Gastrocnemius medialis (tissue), 4 donors: ENCODE measurements at regions of chr5 and their contacts with region 1.

Region 1: DNA sequence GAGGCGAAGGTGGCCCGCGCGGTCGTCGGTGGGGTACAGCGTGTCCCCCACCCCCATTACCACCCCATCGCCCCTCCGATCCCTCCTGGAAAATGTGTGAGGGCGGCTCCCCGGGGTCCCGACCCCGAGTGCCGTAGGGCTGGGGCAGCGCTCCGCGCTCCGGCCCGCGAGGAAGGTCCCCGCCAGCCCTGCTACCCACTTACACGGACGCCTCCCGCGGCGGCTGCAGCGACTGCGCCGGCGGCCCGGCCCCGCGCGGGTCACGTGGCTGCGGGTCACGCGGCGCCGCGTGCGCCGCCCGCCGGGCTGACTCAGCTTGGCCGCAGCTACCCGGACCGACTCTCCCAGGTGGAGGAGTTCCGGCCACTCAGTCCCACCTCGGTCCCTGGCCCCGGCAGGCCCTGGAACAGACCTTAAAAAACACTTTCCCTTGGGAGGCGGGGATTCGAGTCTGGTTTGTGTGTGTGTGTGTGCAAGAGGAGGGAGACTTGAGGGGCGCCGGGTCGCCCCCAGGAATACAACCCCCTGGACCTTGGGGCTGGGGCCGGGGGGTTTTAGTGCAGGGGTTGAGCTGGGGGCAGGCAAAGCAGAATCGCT is at the start of gene GNPDA1:
- DNase-seq: peak; percentile 76 to 85
- ATAC-seq: peak; percentile 84 to 89
- H3K4me3 ChIP-seq: peak within 1 kb of the TSS; percentile 74 to 91 (median 83)
- H3K27ac ChIP-seq: peak within 1 kb of the TSS; percentile 91 to 99 (median 98)
- H3K4me1 ChIP-seq: peaks cover 15 to 19% of the 10 kb centered on the region in 2 donors
- H3K27me3 ChIP-seq: no peaks in the 10 kb centered on the region
- CTCF ChIP-seq: peak in 4 of 5 experiments; percentile 19 to 52 (median 38)
- POLR2A ChIP-seq: peak; percentile 86 to 93
- total RNA-seq, gene GNPDA1: 22.3 to 50.0 (median 47.3) TPM

Region 2: DNA sequence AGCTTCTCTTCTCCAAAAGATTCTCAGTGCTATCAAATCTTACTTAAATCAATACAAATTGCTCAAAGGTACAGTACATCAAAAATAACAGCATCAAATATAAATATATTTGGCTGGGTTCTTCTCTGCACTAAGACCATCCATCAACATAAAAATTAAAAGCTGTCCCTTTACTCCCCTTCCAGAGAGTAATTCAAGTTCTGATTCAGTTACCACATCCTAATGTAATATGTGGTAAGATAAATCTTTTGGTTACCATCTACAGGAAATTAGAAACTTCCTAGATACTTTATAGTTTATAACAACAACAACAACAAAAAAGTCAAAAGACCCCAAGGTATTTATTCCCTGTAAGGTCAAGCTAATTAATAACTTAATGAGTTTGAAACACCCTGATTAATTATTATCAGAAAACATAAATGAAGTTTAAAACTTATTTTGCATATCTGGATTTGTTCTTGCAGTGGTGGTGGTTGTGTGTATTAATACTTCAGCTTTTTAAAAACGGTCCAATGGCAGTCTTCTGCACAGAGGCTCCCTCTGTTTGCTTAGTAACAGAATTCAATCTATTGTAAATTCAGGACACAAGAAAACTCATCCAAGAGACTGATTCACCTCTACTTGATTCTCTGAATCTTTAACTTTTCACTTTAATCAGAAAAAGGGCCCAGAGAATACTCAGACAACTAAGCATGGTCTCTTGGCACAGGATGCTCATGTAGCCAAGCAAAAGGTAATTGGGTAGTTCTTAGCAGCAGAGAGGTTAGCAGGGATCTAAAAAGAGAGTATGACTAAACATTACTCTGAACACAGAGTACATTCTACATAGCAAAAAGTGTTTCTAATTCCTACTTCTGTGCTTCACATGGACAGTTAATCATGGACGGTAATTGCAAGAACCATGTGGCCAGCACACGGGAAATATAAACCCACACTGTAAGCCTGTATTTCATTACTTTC is 414.2 kb before region 1 on chr5:
- in situ Hi-C with region 1: no loop called
- intact Hi-C with region 1: no loop called
- DNase-seq: no peak
- ATAC-seq: peak; percentile 97
- H3K4me3 ChIP-seq: peak overlapping the region in 2 of 4 donors; percentile 0 to 16
- H3K27ac ChIP-seq: peak overlapping the region; percentile 89 to 94 (median 91)
- H3K4me1 ChIP-seq: peaks cover 78 to 83% of the 10 kb centered on the region in 2 donors
- H3K27me3 ChIP-seq: no peaks in the 10 kb centered on the region
- CTCF ChIP-seq: no peak
- POLR2A ChIP-seq: no peak

Region 3: GRCh38 chr5:141866149-141867120 is 146.5 kb before region 1 on chr5:
- in situ Hi-C with region 1: no loop called
- intact Hi-C with region 1: no loop called
- DNase-seq: no peak
- ATAC-seq: no peak
- H3K4me3 ChIP-seq: no peak overlapping the region
- H3K27ac ChIP-seq: no peak overlapping the region
- H3K4me1 ChIP-seq: no peaks in the 10 kb centered on the region
- H3K27me3 ChIP-seq: peaks cover 0 to 5% (median 3%) of the 10 kb centered on the region in 3 donors
- CTCF ChIP-seq: no peak
- POLR2A ChIP-seq: no peak

Region 4: GRCh38 chr5:141968914-141969608 is 43.8 kb before region 1 on chr5 and contains the start of gene RNF14:
- in situ Hi-C with region 1: no loop called
- intact Hi-C with region 1: loop called (anchors 2 kb)
- DNase-seq: peak; percentile 86 to 90
- ATAC-seq: peak; percentile 89 to 94
- H3K4me3 ChIP-seq: peak within 1 kb of the TSS; percentile 59 to 89 (median 76)
- H3K27ac ChIP-seq: peak within 1 kb of the TSS; percentile 88 to 97 (median 94)
- H3K4me1 ChIP-seq: peaks cover 17 to 26% of the 10 kb centered on the region in 2 donors
- H3K27me3 ChIP-seq: no peaks in the 10 kb centered on the region
- CTCF ChIP-seq: peak; percentile 94 to 98 (median 97)
- POLR2A ChIP-seq: peak; percentile 91 to 94
- total RNA-seq, gene RNF14: 71.4 to 107 (median 84.5) TPM

Region 5: GRCh38 chr5:141992349-141992963 is 20.4 kb before region 1 on chr5:
- in situ Hi-C with region 1: no loop called
- intact Hi-C with region 1: loop called (anchors 2 kb)
- DNase-seq: peak; percentile 36 to 65
- ATAC-seq: peak; percentile 83 to 86
- H3K4me3 ChIP-seq: no peak overlapping the region
- H3K27ac ChIP-seq: peak overlapping the region in 1 of 4 donors; percentile 18
- H3K4me1 ChIP-seq: peaks cover 0 to 5% of the 10 kb centered on the region in 2 donors
- H3K27me3 ChIP-seq: no peaks in the 10 kb centered on the region
- CTCF ChIP-seq: peak; percentile 58 to 84 (median 71)
- POLR2A ChIP-seq: no peak

Region 6: DNA sequence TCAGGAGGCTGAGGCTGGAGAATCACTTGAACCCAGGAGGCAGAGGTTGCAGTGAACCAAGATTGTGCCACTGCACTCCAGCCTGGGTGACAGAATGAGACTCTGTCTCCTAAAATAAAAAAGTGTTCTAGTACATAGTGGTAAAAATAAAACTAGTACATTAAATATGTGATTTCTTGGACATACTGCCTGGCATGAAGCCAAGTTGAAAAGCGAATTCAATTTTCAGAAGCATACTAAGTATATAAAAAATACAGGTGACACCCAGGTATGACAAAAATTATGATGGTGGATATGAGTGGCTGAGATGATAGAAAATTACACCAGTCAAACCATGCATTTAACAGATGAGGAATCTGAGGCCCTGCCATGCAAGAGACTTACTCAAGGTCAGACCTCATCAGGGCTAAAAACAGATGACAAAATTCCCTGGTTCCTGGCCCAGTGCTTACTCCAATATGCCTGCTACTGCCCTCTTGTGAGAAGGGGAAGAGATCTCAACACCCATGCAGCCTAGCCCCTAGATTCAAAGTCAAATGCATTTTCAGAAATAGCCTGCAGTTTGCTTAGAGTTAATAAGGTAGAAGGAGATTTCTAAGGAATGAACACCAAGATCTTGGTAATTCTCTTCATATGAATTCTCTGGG is 46.5 kb after region 1 on chr5:
- in situ Hi-C with region 1: no loop called
- intact Hi-C with region 1: no loop called
- DNase-seq: peak in 1 of 2 donors; percentile 38
- ATAC-seq: peak; percentile 61 to 69
- H3K4me3 ChIP-seq: no peak overlapping the region
- H3K27ac ChIP-seq: peak overlapping the region in 2 of 4 donors; percentile 27 to 44
- H3K4me1 ChIP-seq: peaks cover 6 to 17% of the 10 kb centered on the region in 2 donors
- H3K27me3 ChIP-seq: no peaks in the 10 kb centered on the region
- CTCF ChIP-seq: peak in 2 of 5 experiments; percentile 11 to 13
- POLR2A ChIP-seq: no peak

Region 7: DNA sequence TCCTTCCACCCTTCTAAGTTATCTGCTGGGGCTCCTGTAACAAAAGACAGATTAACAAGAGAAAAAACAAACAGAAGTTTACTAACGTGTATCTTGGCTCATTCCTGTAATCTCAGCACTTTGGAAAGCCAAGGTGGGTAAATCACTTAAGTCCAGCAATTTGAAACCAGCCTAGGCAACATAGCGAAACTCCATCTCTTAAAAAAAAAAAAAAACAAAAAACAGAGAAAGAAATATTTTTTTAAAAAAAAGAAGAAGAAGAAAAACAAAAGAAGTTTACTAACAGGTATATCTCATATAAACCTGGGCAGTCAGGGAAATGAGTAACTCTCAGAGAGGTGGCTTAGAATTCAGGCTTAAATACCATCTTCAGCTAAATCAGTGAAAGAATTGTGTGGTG is 85.4 kb after region 1 on chr5:
- in situ Hi-C with region 1: no loop called
- intact Hi-C with region 1: no loop called
- DNase-seq: no peak
- ATAC-seq: no peak
- H3K4me3 ChIP-seq: no peak overlapping the region
- H3K27ac ChIP-seq: no peak overlapping the region
- H3K4me1 ChIP-seq: peaks cover 18 to 19% of the 10 kb centered on the region in 2 donors
- H3K27me3 ChIP-seq: no peaks in the 10 kb centered on the region
- CTCF ChIP-seq: no peak
- POLR2A ChIP-seq: no peak

Region 8: DNA sequence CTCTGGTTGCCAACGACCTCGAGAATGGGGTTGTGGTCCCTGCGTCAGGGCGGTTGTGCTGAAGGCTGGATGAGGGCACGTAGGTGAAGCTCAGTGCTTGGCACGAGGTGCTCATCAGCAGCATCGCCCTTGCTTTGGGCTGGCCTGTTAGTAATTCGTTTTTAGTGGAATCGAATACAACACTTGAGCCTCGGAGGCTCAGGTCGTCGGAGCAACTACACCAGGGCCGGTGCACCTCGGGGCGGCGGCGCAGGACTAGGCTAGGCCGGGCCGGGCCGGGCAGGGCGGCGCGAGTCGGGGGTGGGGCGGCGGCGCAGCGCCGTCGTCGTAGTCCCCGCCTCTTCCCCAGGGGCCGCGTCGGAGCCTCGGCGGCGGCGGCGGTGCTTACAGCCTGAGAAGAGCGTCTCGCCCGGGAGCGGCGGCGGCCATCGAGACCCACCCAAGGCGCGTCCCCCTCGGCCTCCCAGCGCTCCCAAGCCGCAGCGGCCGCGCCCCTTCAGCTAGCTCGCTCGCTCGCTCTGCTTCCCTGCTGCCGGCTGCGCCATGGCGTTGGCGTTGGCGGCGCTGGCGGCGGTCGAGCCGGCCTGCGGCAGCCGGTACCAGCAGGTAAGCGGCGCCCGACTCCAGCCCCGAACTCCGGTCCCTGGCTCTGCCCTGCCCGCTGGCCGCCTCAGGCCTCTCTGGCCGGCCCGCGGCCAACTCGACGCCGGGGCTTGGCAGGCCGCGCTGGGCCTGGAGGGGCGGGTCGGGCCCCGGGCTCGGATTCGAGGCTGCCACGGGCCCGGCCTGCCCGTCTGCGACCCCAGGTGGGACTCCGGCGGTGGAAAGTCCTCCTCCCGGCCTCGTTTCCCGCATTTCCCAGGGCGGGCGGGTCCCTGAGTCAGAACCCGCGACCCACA is 95.8 kb after region 1 on chr5 and contains the start of gene NDFIP1:
- in situ Hi-C with region 1: loop called in 1 of 4 experiments (anchors 5 kb)
- intact Hi-C with region 1: loop called (anchors 2 kb)
- DNase-seq: peak; percentile 68 to 81
- ATAC-seq: peak; percentile 90
- H3K4me3 ChIP-seq: peak within 1 kb of the TSS; percentile 64 to 86 (median 70)
- H3K27ac ChIP-seq: peak within 1 kb of the TSS; percentile 83 to 98 (median 96)
- H3K4me1 ChIP-seq: peaks cover 25 to 32% of the 10 kb centered on the region in 2 donors
- H3K27me3 ChIP-seq: no peaks in the 10 kb centered on the region
- CTCF ChIP-seq: peak in 2 of 5 experiments; percentile 11 to 30
- POLR2A ChIP-seq: peak; percentile 91 to 92
- total RNA-seq, gene NDFIP1: 37.1 to 63.5 (median 42.5) TPM